ENCODE measurements at regions of chr6 and their contacts with region 1.

Region 1: GRCh38 chr6:89371849-89372505 is 19.5 kb upstream of the UBE2J1 start:
- DNase-seq: peak; percentile 74
- H3K4me3 Mint-ChIP-seq: no peak overlapping the region
- H3K27ac Mint-ChIP-seq: peak overlapping the region; percentile 47
- H3K4me1 Mint-ChIP-seq: peaks cover 30% of the 10 kb centered on the region
- H3K27me3 Mint-ChIP-seq: no peaks in the 10 kb centered on the region

Region 2: DNA sequence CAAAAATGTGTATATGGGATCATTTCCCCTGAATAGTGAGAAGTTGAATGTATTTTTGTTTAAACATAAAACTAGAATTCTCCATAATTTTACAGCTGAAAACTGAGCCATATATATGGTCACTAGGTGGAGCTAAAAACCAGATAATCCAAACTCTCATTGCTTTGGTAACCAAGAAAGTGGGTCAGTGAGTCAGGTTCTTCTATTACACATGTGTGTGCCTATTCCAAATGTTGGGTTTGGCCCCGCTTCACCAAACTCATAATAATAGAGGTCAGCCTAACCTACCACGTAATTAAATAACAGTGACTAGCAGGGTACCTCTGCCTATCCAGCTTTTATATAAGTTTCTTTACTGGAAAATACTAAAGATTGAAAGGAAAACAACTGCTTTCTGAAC is 389.3 kb before region 1 on chr6:
- intact Hi-C with region 1: loop called (anchors 1 kb)
- DNase-seq: no peak
- H3K4me3 Mint-ChIP-seq: no peak overlapping the region
- H3K27ac Mint-ChIP-seq: no peak overlapping the region
- H3K4me1 Mint-ChIP-seq: no peaks in the 10 kb centered on the region
- H3K27me3 Mint-ChIP-seq: peaks cover 10% of the 10 kb centered on the region

Region 3: DNA sequence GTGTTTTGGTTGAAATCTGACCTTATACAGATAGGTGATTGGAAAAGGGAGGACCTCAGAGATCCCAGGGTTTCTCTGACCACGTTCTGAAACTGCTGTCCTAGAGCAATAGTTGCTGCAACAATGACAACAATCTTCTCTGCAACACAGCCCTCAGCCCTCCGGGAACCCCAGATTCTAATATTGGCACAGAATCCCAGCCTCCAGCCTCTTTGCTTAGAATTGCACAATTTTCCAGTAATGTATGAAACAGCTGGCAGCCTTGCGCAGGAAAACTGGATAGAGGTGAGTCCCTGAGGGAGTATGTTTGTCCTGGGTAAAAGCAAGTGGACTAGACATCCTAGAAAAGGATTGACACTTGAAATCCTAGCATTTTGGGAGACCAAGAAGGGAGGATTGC is 321.8 kb before region 1 on chr6:
- intact Hi-C with region 1: no loop called
- DNase-seq: no peak
- H3K4me3 Mint-ChIP-seq: no peak overlapping the region
- H3K27ac Mint-ChIP-seq: no peak overlapping the region
- H3K4me1 Mint-ChIP-seq: peaks cover 8% of the 10 kb centered on the region
- H3K27me3 Mint-ChIP-seq: peaks cover 3% of the 10 kb centered on the region

Region 4: GRCh38 chr6:89352278-89353117 is 19.5 kb before region 1 on chr6 and contains the start of gene UBE2J1:
- intact Hi-C with region 1: loop called (anchors 2 kb)
- DNase-seq: peak; percentile 74
- H3K4me3 Mint-ChIP-seq: peak within 1 kb of the TSS; percentile 96
- H3K27ac Mint-ChIP-seq: peak within 1 kb of the TSS; percentile 92
- H3K4me1 Mint-ChIP-seq: peaks cover 66% of the 10 kb centered on the region
- H3K27me3 Mint-ChIP-seq: no peaks in the 10 kb centered on the region
- total RNA-seq, gene UBE2J1: 34.4 and 34.8 TPM in 2 replicates

Region 5: DNA sequence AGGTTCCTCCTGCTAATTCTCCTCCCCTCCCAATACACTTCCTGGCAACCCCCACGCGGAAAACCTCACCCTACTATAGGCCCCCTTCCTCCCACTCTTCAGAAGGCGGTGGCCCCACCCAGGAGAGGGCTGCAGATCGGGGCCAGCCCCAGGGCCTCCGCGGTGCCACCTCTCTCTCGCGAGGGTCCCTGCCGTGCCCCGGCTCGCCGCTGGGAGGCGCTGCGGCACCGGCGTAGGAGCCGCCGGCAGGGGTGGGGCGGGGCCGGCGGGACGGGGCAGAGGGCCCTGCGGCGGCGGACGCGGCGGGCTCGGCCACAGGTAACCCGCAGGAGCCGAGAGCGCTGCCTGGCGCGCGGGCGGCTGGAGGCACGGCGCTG is 60.9 kb after region 1 on chr6 and contains the start of gene ANKRD6:
- intact Hi-C with region 1: loop called (anchors 5 kb)
- DNase-seq: peak; percentile 73
- H3K4me3 Mint-ChIP-seq: peak within 1 kb of the TSS; percentile 79
- H3K27ac Mint-ChIP-seq: peak within 1 kb of the TSS; percentile 20
- H3K4me1 Mint-ChIP-seq: peaks cover 14% of the 10 kb centered on the region
- H3K27me3 Mint-ChIP-seq: peaks cover 55% of the 10 kb centered on the region
- total RNA-seq, gene ANKRD6: 2.2 TPM in 2 replicates

Region 6: GRCh38 chr6:89610149-89610642 is 238.2 kb after region 1 on chr6:
- intact Hi-C with region 1: loop called (anchors 1 kb)
- DNase-seq: peak; percentile 57
- H3K4me3 Mint-ChIP-seq: no peak overlapping the region
- H3K27ac Mint-ChIP-seq: no peak overlapping the region
- H3K4me1 Mint-ChIP-seq: no peaks in the 10 kb centered on the region
- H3K27me3 Mint-ChIP-seq: no peaks in the 10 kb centered on the region

Region 7: DNA sequence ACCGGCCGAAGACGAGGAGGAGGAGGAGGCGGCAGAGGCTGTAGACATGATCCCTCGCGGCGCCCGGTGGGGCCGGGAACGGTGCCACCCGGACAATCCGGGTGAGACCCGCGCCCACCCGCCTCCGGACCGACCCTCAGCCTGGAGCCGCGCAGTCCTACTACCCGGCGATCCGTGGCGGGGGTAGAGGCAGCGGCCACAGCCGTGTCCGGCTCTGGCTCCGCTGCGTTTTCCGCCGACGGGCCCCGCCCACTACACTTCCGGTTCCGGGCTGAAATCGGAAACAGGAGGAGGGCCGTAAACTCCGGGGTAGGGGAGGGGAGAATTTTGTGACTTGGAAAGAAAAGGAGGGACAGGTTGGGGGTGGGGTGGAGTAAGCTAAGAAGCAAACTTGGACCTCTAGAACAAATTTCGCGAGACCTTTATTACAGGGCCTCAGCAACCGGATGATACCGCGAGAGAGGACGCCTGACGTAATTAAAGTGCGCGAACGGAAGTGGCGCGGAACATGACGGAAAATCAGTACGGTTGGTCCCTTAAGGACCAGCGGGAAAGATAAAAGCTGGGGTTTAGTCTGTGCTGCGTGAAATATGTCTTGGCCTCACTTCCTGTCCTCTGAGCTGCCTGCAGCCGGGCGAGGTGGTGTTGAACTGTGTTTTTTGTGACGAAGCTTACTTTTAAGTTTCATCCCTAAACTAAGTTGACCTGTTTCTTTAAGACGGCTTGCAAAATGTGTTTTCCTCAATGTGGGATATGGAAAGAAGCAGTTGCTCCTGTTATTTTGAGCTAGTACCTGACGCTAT is 1215.1 kb after region 1 on chr6 and contains the start of gene MAP3K7:
- intact Hi-C with region 1: loop called (anchors 10 kb)
- DNase-seq: peak; percentile 93
- H3K4me3 Mint-ChIP-seq: peak within 1 kb of the TSS; percentile 94
- H3K27ac Mint-ChIP-seq: peak within 1 kb of the TSS; percentile 95
- H3K4me1 Mint-ChIP-seq: peaks cover 42% of the 10 kb centered on the region
- H3K27me3 Mint-ChIP-seq: peaks cover 20% of the 10 kb centered on the region
- total RNA-seq, gene MAP3K7: 30.5 and 32.1 TPM in 2 replicates

Measured in activated T-helper 2 cell treated with anti-CD3 and anti-CD28 coated beads, Interferon-gamma antibody, Interleukin-2, Interleukin-4, amounts not matched to agents 10 μg/mL and 5 μg/mL and 100 μg/mL, durations not matched to agents 14 hours and 24 hours and 36 hours (primary cell).